GM12878 (cell line): ENCODE measurements at regions of chr5 and their contacts with region 1.

Region 1: GRCh38 chr5:125006011-125006685 is 259.7 kb upstream of the ZNF608 start:
- DNase-seq: peak; percentile 71
- ATAC-seq: peak; percentile 82
- H3K4me3 ChIP-seq: 0 out of 2 replicates have a peak overlapping the region, but pooled peaks have one; percentile 0
- H3K27ac ChIP-seq: peak overlapping the region; percentile 69
- H3K4me1 ChIP-seq: peaks cover 18% of the 10 kb centered on the region
- H3K27me3 ChIP-seq: no peaks in the 10 kb centered on the region
- CTCF ChIP-seq: no peak
- EP300 ChIP-seq: peak; percentile 92 to 95
- POLR2A ChIP-seq: no peak
- RAD21 ChIP-seq: peak; percentile 36

Region 2: GRCh38 chr5:124902097-124902821 is 103.9 kb before region 1 on chr5:
- CTCF ChIA-PET with region 1: no interaction called
- POLR2A ChIA-PET with region 1: no interaction called
- RAD21 ChIA-PET with region 1: no interaction called
- SMC1A ChIA-PET with region 1: interaction called, 4 read pairs
- in situ Hi-C with region 1: no loop called
- intact Hi-C with region 1: loop called (anchors 5 kb)
- DNase-seq: peak; percentile 92
- ATAC-seq: peak; percentile 99
- H3K4me3 ChIP-seq: 0 out of 2 replicates have a peak overlapping the region, but pooled peaks have one; percentile 15
- H3K27ac ChIP-seq: peak overlapping the region; percentile 59
- H3K4me1 ChIP-seq: peaks cover 17% of the 10 kb centered on the region
- H3K27me3 ChIP-seq: no peaks in the 10 kb centered on the region
- CTCF ChIP-seq: no peak
- EP300 ChIP-seq: peak; percentile 77 to 90; a peak in 3 of 4 replicates
- POLR2A ChIP-seq: 0 out of 2 replicates have a peak, but pooled peaks have one; percentile 33
- RAD21 ChIP-seq: peak; percentile 33; the same call in 1 of the 2 replicates

Region 3: DNA sequence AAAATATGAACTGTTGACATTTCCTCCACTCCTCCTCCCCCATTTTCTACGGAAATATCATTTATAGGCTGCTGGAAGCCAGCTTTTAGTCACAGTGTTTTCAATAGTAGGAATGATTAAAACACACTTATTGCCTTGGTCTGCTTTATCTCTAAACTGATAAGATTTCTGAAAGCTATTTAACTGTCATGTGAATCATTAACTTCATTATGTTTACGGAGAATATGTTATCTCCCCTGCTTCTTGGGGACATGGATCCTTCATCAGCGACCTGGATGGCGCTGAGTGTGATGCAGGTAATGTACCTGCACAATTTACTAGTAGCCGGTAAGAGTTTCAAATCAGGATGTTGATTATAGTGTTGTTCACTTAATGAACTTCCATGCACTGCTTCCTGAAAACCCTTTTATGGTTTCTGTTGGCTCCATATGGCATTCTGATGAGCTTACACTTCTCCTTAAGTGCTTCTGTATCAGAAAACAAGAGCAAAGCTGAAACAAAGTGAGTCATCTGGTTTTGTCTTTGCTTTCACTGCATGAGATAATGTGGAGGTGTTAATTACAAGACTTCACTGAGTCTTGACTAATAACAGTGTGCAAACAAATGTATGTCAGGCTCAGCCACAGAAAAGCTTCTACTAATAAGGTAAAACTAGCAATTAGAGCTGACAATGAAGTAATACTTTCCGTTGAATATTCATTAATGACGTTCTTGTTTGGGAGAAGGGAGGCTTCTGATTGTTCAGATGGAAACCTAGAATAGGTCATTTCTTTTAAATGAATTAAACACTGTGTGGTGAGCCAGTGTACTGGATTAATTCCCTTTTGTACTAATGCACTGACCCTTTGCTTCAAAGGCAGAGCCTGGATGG is 97.3 kb before region 1 on chr5:
- CTCF ChIA-PET with region 1: interaction called, 4 read pairs
- POLR2A ChIA-PET with region 1: no interaction called
- RAD21 ChIA-PET with region 1: interaction called, 9 read pairs
- SMC1A ChIA-PET with region 1: interaction called, 11 read pairs
- in situ Hi-C with region 1: no loop called
- intact Hi-C with region 1: loop called (anchors 5 kb)
- DNase-seq: peak; percentile 75
- ATAC-seq: peak; percentile 88
- H3K4me3 ChIP-seq: no peak overlapping the region
- H3K27ac ChIP-seq: peak overlapping the region; percentile 51
- H3K4me1 ChIP-seq: peaks cover 41% of the 10 kb centered on the region
- H3K27me3 ChIP-seq: no peaks in the 10 kb centered on the region
- CTCF ChIP-seq: no peak
- EP300 ChIP-seq: peak; percentile 96 to 98
- POLR2A ChIP-seq: no peak
- RAD21 ChIP-seq: peak; percentile 20; the same call in 1 of the 2 replicates

Region 4: DNA sequence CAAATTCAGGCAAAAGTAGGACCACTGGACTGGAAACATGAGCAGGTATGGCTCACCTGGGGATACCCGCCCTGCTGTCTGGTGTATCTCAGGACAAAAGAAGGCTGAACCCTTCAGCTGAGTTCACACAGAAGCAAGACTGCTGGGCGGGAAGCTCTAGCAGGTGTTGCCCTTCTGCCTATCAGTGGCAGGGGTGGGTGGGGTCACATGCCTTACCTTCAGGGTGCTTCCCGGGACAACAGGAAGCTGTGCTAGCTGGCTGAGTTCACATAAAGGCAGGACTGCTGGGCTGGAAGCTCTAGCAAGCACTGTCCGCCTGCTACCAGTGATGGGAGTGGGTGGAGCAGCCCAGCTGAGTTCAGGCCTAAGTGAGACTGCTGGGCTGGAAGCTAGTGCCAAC is 239.1 kb after region 1 on chr5:
- CTCF ChIA-PET with region 1: no interaction called
- POLR2A ChIA-PET with region 1: no interaction called
- RAD21 ChIA-PET with region 1: no interaction called
- SMC1A ChIA-PET with region 1: no interaction called
- in situ Hi-C with region 1: no loop called
- intact Hi-C with region 1: no loop called
- DNase-seq: no peak
- ATAC-seq: no peak
- H3K4me3 ChIP-seq: no peak overlapping the region
- H3K27ac ChIP-seq: no peak overlapping the region
- H3K4me1 ChIP-seq: no peaks in the 10 kb centered on the region
- H3K27me3 ChIP-seq: no peaks in the 10 kb centered on the region
- CTCF ChIP-seq: no peak
- EP300 ChIP-seq: no peak
- POLR2A ChIP-seq: no peak
- RAD21 ChIP-seq: no peak

Region 5: GRCh38 chr5:125412561-125413495 is 406.7 kb after region 1 on chr5:
- CTCF ChIA-PET with region 1: no interaction called
- POLR2A ChIA-PET with region 1: no interaction called
- RAD21 ChIA-PET with region 1: interaction called, 3 read pairs
- SMC1A ChIA-PET with region 1: no interaction called
- in situ Hi-C with region 1: no loop called
- intact Hi-C with region 1: loop called (anchors 5 kb)
- DNase-seq: no peak
- ATAC-seq: peak; percentile 57
- H3K4me3 ChIP-seq: peak overlapping the region; percentile 51; the same call in 1 of the 2 replicates
- H3K27ac ChIP-seq: peak overlapping the region; percentile 88
- H3K4me1 ChIP-seq: peaks cover 43% of the 10 kb centered on the region
- H3K27me3 ChIP-seq: no peaks in the 10 kb centered on the region
- CTCF ChIP-seq: peak; percentile 2 to 23 (median 3); a peak in 1 of 6 replicates
- EP300 ChIP-seq: no peak
- POLR2A ChIP-seq: no peak
- RAD21 ChIP-seq: 0 out of 2 replicates have a peak, but pooled peaks have one; percentile 23